Posterior vena cava (tissue), 2 donors: ENCODE measurements at regions of chr18 and their contacts with region 1.

Region 1: DNA sequence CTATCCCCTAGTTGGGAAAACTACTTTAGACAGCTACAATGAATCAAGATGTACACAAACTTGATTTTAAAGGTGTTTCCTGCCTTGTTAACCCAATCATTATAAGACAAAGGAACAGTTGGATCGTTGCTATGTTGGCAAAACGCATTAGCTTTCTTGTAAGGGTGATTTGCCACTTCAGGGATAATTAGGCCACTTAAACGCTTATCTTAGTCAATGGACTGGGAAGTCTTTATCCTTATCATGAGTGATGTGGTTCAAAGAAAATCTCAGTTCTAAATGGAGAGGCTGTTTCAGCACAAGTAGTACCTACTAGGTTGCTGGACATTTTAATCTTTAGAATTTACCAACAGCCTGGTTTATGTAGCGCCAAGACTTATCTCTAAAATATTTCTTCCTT is 406.1 kb upstream of the MEX3C start:
- DNase-seq: no peak

Region 2: GRCh38 chr18:51651761-51652160 is 48.2 kb after region 1 on chr18:
- intact Hi-C with region 1: no loop called
- DNase-seq: no peak

Region 3: DNA sequence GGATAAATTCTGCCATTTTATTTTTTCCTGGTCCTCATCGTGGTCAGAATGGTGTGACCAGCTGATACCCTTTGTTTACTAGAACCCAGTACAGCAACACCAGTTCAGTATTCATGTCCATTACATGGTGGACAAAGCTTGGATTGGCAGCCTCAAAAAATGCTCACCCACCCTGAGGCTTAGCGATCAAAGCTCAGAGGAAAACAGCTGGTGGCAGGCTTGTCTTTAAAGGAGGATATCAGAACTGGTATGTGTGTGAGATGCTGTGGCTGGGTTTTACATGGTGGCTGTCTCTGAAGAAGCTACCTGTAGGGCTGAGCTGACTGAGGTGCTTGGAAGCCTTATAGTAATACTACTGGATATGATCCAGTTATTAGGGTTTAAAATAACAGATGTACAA is 65.1 kb after region 1 on chr18:
- intact Hi-C with region 1: no loop called
- DNase-seq: no peak

Region 4: DNA sequence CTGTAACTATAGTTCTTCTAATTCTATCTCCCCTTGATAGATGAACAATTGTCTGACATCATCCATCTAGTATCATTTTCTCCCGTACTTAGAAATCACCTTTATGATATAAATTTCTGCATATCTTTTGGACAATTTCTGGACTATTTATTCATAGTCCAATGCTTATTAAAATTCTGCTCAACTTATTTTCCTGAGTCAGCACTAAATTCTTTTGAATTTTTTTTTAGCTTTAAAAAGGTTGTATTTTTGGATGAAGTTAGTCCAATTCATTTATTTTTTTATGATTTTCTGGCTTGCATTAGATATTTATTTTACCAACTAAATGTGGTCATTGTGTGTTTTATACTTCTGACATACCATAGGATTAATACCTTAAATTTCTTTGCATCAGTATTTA is 198.0 kb after region 1 on chr18:
- intact Hi-C with region 1: no loop called
- DNase-seq: no peak

Region 5: DNA sequence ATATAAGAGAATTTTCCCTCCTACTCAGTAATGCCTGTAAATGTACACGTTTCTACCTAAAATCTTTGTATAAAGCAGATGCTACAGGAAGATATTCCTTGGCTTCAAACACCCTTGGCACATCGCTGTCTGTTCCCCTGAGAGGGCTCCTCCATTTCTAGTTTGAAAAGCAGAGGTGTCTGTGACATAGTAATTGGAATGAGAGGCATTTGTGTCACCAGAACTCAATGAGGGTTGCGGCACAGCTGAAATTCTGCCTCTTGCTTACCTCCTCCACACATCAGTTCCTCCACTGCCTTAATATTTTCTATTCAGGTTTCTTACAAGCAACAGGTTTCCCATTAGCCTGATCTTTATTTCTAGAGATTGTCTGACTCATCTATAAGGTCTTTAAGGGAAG is 376.6 kb after region 1 on chr18:
- intact Hi-C with region 1: loop called in 1 of 2 experiments (anchors 5 kb)
- DNase-seq: no peak